Activated naive CD4-positive, alpha-beta T cell treated with anti-CD3 and anti-CD28 coated beads for 36 hours (primary cell): ENCODE measurements at regions of chrX and their contacts with region 1.

Region 1: DNA sequence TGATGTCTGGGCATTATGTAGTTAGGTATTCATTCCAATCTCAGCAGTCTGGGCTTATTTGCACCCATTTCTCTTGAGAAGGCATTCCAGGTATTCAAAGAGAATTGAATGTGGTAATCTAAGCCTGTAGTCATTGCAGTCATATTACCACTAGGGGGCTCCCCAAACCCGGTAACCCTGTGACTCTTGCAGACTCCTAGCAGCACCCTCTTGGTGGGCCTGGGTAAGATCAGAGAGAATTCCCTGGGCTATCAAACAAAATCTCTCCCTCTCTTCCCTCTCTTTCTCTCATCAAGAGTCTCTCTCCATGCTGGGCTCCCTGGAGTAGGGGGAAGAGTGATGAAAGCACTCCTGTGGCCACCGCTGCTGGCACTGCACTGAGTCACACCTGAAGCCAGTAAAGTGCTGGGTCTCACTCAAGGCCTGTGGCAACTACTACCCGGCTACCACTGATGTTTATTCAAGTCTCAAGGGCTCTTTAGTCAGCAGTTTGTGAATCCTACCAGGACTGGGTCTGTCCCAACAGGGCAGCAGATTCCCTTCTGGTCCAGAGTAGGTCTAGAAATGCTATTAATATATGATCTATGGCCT is 187.7 kb upstream of the NUDT10 start:
- DNase-seq: peak; percentile 52
- H3K4me3 Mint-ChIP-seq: no peak overlapping the region
- H3K27ac Mint-ChIP-seq: no peak overlapping the region
- H3K4me1 Mint-ChIP-seq: no peaks in the 10 kb centered on the region
- H3K27me3 Mint-ChIP-seq: peaks cover 7% of the 10 kb centered on the region

Region 2: DNA sequence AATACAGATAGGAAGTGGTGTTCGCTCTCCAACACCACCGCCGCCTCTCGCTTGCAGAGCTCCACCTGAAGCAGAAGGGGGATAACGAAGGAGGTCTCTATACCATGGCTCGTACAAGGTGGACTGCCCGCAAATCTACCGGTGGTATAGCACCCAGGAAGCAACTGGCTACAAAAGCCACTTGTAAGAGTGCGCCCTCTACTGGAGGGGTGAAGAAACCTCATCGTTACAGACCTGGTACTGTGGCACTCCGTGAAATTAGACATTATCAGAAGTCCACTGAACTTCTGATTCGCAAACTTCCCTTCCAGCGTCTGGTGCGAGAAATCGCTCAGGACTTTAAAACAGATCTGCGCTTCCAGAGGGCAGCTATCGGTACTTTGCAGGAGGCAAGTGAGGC is 239.6 kb before region 1 on chrX:
- CTCF ChIA-PET with region 1: no interaction called
- intact Hi-C with region 1: no loop called
- DNase-seq: peak; percentile 4
- H3K4me3 Mint-ChIP-seq: no peak overlapping the region
- H3K27ac Mint-ChIP-seq: no peak overlapping the region
- H3K4me1 Mint-ChIP-seq: no peaks in the 10 kb centered on the region
- H3K27me3 Mint-ChIP-seq: no peaks in the 10 kb centered on the region

Region 3: GRCh38 chrX:51169410-51169809 is 24.5 kb after region 1 on chrX:
- CTCF ChIA-PET with region 1: no interaction called
- intact Hi-C with region 1: loop called (anchors 2 kb)
- DNase-seq: no peak
- H3K4me3 Mint-ChIP-seq: no peak overlapping the region
- H3K27ac Mint-ChIP-seq: no peak overlapping the region
- H3K4me1 Mint-ChIP-seq: no peaks in the 10 kb centered on the region
- H3K27me3 Mint-ChIP-seq: no peaks in the 10 kb centered on the region

Region 4: GRCh38 chrX:51420610-51421009 is 275.7 kb after region 1 on chrX:
- CTCF ChIA-PET with region 1: interaction called, 5 read pairs
- intact Hi-C with region 1: loop called (anchors 10 kb)
- DNase-seq: peak; percentile 37
- H3K4me3 Mint-ChIP-seq: no peak overlapping the region
- H3K27ac Mint-ChIP-seq: no peak overlapping the region
- H3K4me1 Mint-ChIP-seq: peaks cover 6% of the 10 kb centered on the region
- H3K27me3 Mint-ChIP-seq: no peaks in the 10 kb centered on the region

Region 5: GRCh38 chrX:51461053-51462044 is 316.4 kb after region 1 on chrX:
- CTCF ChIA-PET with region 1: no interaction called
- intact Hi-C with region 1: loop called (anchors 2 kb)
- DNase-seq: peak; percentile 17
- H3K4me3 Mint-ChIP-seq: no peak overlapping the region
- H3K27ac Mint-ChIP-seq: no peak overlapping the region
- H3K4me1 Mint-ChIP-seq: no peaks in the 10 kb centered on the region
- H3K27me3 Mint-ChIP-seq: no peaks in the 10 kb centered on the region

Region 6: DNA sequence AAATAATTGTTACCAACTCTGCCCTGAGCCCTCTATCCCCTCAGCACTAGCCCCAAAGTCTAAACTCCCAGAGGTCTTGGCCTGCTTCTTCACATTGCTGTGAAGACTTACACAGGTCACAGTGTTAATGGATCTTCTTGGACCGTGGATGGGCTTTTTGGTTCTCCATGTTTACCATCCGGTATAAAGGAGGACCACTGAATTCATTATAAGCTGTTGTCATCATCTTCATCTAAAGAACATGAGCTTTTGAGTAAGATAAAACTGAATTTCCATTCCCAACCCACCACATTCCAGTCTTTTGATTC is 343.0 kb after region 1 on chrX:
- CTCF ChIA-PET with region 1: no interaction called
- intact Hi-C with region 1: no loop called
- DNase-seq: no peak
- H3K4me3 Mint-ChIP-seq: no peak overlapping the region
- H3K27ac Mint-ChIP-seq: no peak overlapping the region
- H3K4me1 Mint-ChIP-seq: no peaks in the 10 kb centered on the region
- H3K27me3 Mint-ChIP-seq: peaks cover 7% of the 10 kb centered on the region